Heart right ventricle (tissue), 16 donors: ENCODE measurements at regions of chr6 and their contacts with region 1.

Region 1: DNA sequence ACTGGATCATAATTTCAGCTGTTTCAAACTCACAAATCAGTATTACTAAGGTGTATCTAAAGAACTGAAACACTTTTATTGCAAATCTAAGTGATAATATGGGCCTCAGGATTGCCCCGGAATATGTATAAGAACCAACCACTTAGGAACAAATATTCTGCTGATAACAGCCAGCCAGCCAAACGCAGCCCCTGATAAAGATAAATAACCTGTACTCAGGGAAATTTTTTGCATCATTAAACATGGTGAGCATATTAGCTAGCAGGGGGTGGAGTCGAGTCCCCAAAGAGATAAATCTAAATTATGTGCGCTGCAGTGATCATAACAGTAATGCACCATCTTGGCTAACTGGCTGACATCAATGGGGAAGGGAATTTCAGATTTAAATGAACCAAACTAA is 410.2 kb upstream of the MAP3K7 start:
- DNase-seq: no peak
- ATAC-seq: no peak
- H3K4me3 ChIP-seq: no peak overlapping the region
- H3K27ac ChIP-seq: no peak overlapping the region
- H3K4me1 ChIP-seq: no peaks in the 10 kb centered on the region
- H3K27me3 ChIP-seq: no peaks in the 10 kb centered on the region
- CTCF ChIP-seq: no peak

Region 2: DNA sequence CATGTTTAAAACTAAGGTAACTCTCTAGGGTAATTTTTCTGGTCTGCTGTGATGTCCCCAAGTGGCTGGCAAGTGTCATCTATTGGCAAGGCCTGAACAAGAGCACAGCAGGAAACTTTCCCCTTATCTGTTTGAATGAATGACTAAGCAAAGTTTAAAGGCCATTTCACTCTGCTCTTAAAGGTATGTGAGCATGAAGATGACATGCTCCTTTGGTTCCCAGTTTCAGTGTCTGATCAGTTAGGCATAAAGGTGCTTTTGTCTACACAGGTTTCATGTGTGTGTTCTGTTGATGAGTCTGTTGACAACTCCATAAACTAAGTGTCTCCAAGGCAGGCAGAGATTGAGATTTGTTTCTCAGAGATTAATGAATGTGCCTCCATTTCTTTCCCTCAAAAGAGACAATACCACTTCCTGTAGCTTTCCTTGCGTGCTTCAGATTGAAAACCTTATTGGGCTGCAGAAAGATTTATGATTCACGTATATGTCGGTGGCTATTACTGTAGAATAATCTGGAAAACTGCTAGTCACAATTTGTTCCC is 494.1 kb before region 1 on chr6:
- intact Hi-C with region 1: loop called in 1 of 10 experiments (anchors 5 kb)
- DNase-seq: no peak
- ATAC-seq: peak in 4 of 8 donors; percentile 11 to 71 (median 50)
- H3K4me3 ChIP-seq: no peak overlapping the region
- H3K27ac ChIP-seq: no peak overlapping the region
- H3K4me1 ChIP-seq: peaks cover 0 to 6% (median 0%) of the 10 kb centered on the region in 9 donors
- H3K27me3 ChIP-seq: no peaks in the 10 kb centered on the region
- CTCF ChIP-seq: no peak

Region 3: DNA sequence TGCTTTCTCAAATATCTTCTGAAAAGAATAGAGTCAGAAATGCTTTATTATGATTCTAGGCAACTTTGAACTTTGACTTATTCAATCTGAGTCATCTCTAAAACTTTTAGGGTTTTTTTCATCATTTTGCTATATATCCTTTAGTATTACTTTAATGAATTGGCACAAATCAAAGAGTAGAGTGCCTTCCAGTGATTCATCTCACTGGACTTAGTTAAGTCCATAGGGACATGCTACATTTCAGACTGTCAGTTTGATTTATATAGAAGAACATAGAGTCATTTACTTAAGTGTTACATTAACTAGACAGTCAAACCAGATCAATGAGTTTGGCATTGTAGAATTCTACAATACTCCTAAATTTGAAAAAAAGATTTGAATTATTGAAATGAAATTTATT is 825.5 kb after region 1 on chr6:
- intact Hi-C with region 1: no loop called
- DNase-seq: no peak
- ATAC-seq: no peak
- H3K4me3 ChIP-seq: no peak overlapping the region
- H3K27ac ChIP-seq: no peak overlapping the region
- H3K4me1 ChIP-seq: no peaks in the 10 kb centered on the region
- H3K27me3 ChIP-seq: no peaks in the 10 kb centered on the region
- CTCF ChIP-seq: no peak